Ovary (tissue), 10 donors: ENCODE measurements at regions of chr5 and their contacts with region 1.

Region 1: DNA sequence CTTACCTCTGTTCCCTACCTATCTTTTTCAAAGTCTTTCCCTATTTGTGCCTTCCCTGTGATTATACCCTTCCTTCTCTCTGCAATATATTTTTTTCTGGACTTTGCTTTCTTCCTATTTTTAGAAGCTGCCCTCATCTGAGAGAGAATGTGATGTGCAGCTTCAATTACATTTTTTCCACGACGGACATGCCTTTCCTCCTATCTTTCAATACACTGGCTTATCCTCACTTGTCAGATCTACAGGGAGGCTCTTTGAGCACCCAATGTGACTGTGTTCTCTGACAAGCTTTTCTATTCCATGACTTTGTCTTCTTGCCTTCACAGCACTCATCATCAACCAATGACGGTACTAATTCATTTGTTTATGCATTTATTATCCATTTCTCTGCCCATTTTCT is 227.9 kb upstream of the CLINT1 start:
- DNase-seq: no peak
- H3K4me3 ChIP-seq: no peak overlapping the region
- H3K27ac ChIP-seq: no peak overlapping the region
- H3K4me1 ChIP-seq: no peaks in the 10 kb centered on the region
- H3K27me3 ChIP-seq: no peaks in the 10 kb centered on the region
- CTCF ChIP-seq: no peak
- EP300 ChIP-seq: no peak
- POLR2A ChIP-seq: no peak

Region 2: DNA sequence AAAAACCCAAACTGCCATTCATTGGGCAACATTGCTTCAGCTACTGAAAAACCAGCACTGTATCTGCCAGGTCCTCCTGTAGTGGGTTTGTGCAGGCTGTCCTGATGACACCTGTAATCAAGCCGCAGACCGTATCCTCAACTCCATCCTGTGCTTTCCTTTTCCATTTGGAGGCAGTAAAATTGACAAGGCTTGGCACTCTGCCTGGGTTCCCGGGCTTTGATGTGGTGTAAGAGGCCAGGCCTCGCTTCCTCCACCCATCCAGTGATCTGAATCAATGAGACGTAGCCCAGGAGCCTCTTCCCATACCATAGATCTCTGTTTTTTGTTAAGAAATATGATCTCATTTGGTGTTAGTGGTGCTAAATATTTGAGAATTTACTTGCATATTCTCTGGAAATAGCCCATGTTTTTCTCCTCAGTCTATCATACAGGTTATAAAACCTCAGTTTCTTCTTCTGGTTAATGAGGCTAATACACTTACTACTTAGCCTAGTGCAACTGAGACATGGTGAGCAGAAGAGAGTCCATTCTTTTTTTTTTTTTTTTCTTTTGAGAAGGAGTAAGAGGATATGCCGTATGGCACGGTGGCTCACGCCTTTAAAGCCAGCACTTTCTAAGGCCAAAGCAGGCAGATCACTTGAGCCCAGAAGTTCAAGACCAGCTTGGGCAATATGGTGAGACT is 308.6 kb before region 1 on chr5:
- intact Hi-C with region 1: loop called in 1 of 4 experiments (anchors 5 kb)
- DNase-seq: no peak
- H3K4me3 ChIP-seq: no peak overlapping the region
- H3K27ac ChIP-seq: no peak overlapping the region
- H3K4me1 ChIP-seq: no peaks in the 10 kb centered on the region
- H3K27me3 ChIP-seq: no peaks in the 10 kb centered on the region
- CTCF ChIP-seq: no peak
- EP300 ChIP-seq: no peak
- POLR2A ChIP-seq: no peak

Region 3: GRCh38 chr5:158007336-158007735 is 79.5 kb before region 1 on chr5:
- intact Hi-C with region 1: no loop called
- DNase-seq: no peak
- H3K4me3 ChIP-seq: no peak overlapping the region
- H3K27ac ChIP-seq: no peak overlapping the region
- H3K4me1 ChIP-seq: no peaks in the 10 kb centered on the region
- H3K27me3 ChIP-seq: no peaks in the 10 kb centered on the region
- CTCF ChIP-seq: no peak
- EP300 ChIP-seq: no peak
- POLR2A ChIP-seq: no peak